ENCODE measurements at regions of chr2 and their contacts with region 1.

Region 1: DNA sequence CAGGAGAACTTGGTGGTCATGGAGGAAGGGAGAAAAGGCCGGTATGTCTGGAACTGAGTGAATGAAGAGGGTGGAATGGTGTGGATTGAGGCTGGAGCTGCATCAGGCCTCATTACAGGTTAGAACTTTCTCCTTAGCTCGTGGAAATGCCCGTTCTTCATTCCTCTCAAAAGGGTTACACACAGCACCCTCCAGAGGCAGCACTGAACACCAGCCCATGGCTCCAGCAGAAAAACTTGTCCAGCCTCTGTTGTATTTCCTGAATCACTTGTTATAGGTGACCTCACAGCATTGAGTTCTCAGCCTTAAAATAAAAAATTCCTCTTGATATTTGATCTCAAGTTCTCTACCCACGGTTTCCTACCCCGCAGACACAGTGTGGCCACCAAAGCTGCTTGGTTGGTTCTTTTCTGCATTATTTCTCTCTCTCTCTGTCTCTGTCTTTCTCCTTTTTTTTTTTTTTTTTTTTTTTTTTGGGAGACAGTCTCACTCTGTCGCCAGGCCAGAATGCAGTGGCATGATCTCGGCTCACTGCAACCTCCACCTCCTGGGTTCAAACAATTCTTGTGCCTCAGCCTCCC is 89.6 kb downstream of the ITGB1BP1 start:
- DNase-seq: peak in 2 of 4 donors; percentile 56 to 72
- ATAC-seq: peak; percentile 86
- H3K4me3 ChIP-seq: no peak overlapping the region
- H3K27ac ChIP-seq: no peak overlapping the region
- H3K4me1 ChIP-seq: peaks cover 8 to 10% of the 10 kb centered on the region in 2 donors
- H3K27me3 ChIP-seq: no peaks in the 10 kb centered on the region
- CTCF ChIP-seq: peak; percentile 52 to 54

Region 2: DNA sequence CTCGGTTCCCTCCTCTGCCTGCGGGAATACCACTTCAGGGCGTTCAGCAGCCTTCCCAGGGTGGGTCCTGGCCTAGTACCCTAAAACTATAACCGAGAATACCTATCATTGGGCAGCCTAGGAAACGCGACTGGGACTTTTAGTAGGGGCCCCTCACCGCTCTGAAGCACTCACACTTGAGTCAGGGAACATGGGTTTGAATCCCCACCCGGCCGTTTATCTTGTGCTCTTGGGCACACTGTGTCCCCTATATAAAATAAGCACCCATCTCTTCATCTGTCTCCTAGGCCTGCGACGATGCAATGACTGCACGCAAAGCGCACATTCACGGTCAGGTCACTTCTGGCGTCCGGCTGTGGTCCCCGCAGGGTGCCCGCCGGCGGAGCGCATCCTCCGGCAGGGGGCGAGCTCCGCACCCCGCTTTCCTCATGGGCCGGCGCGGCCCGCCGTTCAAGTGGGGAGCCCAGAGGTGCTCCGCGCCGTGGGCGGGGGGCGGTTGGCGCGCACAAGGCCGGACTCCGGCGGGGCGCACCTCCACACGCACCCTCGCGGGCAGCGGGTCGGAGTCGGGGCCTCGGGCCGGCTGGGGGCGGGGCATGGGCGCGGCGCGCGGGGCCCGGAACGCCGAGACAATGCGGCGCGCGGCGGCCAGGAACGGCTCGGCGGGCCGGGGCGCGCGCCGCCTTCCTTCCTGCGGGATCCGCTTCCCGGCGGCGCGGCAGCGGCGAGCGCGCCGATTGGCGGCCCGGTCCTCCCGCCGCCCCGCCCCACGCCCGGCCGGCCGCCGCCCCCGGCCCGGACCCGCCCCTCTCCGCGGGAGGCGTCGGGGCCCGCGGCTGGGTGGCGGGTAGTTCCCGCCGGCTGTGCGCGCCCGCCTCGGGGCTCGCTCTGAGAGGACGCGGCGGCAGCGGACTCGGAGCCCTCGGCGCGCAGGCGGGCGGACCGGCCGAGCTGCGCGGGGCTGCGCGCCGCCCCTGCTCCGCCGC is 127.4 kb before region 1 on chr2 and contains the start of gene ASAP2:
- intact Hi-C with region 1: loop called in 1 of 2 experiments (anchors 5 kb)
- DNase-seq: peak; percentile 60 to 93 (median 74)
- ATAC-seq: peak; percentile 78
- H3K4me3 ChIP-seq: peak within 1 kb of the TSS; percentile 66 to 85
- H3K27ac ChIP-seq: peak within 1 kb of the TSS; percentile 81 to 84
- H3K4me1 ChIP-seq: peaks cover 3 to 38% of the 10 kb centered on the region in 2 donors
- H3K27me3 ChIP-seq: peaks cover 0 to 39% of the 10 kb centered on the region in 2 donors
- CTCF ChIP-seq: peak; percentile 77 to 81
- polyA plus RNA-seq, gene ASAP2: 34.0 to 41.8 (median 37.5) TPM